Right cardiac atrium (tissue), 5 donors: ENCODE measurements at regions of chr16 and their contacts with region 1.

Region 1: DNA sequence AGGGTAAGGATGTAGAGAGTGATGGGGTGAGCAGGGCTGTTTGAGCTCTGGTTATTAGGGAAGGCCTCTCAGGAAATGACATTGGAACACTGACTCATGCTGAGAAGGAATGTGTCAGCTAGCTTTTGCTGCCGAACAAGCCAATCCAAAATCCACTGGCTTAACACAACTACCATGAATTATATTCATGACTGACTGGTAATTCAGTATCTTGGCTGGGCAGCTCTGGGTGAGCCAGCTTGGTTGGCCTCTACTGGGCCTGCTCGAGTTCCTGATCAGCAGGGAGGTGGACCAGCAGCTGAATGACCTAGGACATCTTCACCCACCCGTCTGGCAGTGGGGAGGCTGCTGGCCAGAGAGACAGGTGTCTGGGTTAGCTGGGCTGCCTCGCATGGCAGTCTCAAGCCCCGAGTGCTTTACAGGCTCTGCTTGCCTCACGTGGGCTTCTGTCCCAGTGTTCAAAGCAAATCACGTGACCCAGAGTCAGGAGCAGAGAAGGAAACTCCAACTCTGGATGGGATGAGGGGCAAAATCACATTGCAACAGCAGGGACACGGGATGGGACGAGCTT is 209.4 kb downstream of the KATNIP start:
- DNase-seq: no peak
- ATAC-seq: no peak
- H3K4me3 ChIP-seq: no peak overlapping the region
- H3K27ac ChIP-seq: no peak overlapping the region
- H3K4me1 ChIP-seq: no peaks in the 10 kb centered on the region
- H3K27me3 ChIP-seq: no peaks in the 10 kb centered on the region

Region 2: GRCh38 chr16:27690608-27691007 is 68.8 kb before region 1 on chr16:
- intact Hi-C with region 1: loop called in 1 of 4 experiments (anchors 10 kb)
- DNase-seq: peak in 1 of 3 donors; percentile 59
- ATAC-seq: no peak
- H3K4me3 ChIP-seq: no peak overlapping the region
- H3K27ac ChIP-seq: no peak overlapping the region
- H3K4me1 ChIP-seq: peaks cover 7% of the 10 kb centered on the region
- H3K27me3 ChIP-seq: no peaks in the 10 kb centered on the region

Region 3: DNA sequence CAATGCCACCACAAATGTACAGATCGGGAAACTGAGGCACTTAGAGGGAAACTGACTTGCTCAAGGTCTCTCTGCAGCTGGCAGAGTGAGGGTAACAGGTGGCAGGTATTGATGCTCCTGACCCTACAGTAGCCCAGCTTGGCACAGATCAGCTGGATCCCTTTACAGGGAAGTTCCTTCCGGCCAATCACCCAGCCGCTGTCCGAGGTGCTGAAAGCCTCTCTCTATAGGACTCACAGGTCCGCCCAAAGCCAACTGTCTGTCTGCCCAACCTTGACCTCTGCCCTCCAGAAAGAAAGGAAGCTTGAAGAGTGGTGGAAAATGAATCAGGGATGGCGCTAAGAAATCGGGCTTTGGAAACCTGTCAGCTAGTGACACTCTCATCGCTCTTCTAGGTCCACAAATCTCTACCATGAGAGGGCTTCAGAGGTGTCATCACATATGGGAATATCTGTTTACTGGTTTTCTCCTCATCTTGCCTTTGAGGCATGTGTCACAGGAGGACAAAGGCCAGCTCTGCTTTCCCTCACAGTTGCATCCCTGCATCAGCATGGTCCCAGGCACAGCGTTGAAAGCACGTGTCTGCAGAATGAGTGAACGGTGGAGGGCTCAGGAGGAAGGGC is 36.7 kb after region 1 on chr16:
- intact Hi-C with region 1: no loop called
- DNase-seq: peak in 2 of 3 donors; percentile 44 to 80
- ATAC-seq: peak in 1 of 2 donors; percentile 47
- H3K4me3 ChIP-seq: no peak overlapping the region
- H3K27ac ChIP-seq: no peak overlapping the region
- H3K4me1 ChIP-seq: no peaks in the 10 kb centered on the region
- H3K27me3 ChIP-seq: no peaks in the 10 kb centered on the region